ENCODE measurements at regions of chr3 and their contacts with region 1.

Region 1: DNA sequence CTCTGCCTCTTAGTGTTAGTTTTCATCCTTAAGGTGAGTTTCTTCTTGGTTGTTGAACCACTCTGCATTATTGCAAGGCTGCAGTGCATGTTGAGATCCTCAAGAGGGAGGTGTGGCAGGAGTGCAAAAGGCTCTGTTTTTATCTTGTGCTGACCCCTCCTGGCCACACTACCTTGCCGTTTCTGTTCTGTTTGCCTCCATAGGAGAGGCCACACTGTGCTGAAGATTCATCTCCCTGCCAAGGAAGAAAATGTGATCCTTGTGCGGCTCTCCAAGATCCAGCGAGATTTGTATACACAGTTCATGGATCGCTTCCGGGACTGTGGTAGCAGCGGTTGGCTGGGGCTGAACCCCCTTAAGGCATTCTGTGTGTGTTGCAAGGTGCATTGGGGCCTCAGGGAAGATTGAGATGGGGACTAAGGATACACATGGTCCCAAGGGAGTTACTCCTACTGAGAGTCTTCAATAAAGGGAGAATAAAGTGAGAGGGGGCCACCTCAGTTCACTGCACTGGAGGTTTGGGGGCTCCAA is 33.0 kb upstream of the TEX264 start:
- DNase-seq: peak; percentile 76
- ATAC-seq: peak; percentile 91
- H3K4me3 ChIP-seq: peak overlapping the region; percentile 28; the same call in 1 of the 2 replicates
- H3K27ac ChIP-seq: peak overlapping the region; percentile 44
- H3K4me1 ChIP-seq: peaks cover 10% of the 10 kb centered on the region
- H3K27me3 ChIP-seq: no peaks in the 10 kb centered on the region
- CTCF ChIP-seq: peak; percentile 99

Region 2: DNA sequence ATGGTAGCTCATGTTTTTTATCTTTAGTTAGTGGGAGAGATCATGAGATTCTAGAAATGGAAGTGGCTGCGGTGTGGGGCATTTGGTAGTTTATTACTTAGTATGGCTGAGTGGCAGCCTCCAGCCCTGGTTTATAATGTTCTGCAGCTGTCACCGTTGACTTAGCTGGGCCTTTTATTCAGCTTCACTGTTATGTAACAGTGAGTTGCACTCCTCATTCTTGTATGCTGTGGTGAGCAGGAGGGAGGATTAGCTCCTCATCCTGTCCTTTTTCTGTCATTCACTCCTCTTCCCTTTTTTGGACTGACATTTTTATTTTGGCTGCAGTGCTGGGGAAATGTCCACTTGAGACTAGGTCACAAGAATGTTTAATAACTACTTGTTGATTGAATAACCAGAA is 70.0 kb before region 1 on chr3:
- CTCF ChIA-PET with region 1: no interaction called
- POLR2A ChIA-PET with region 1: no interaction called
- intact Hi-C with region 1: no loop called
- DNase-seq: no peak
- ATAC-seq: no peak
- H3K4me3 ChIP-seq: no peak overlapping the region
- H3K27ac ChIP-seq: no peak overlapping the region
- H3K4me1 ChIP-seq: no peaks in the 10 kb centered on the region
- H3K27me3 ChIP-seq: no peaks in the 10 kb centered on the region
- CTCF ChIP-seq: no peak

Region 3: GRCh38 chr3:51670823-51671733 is 33.1 kb after region 1 on chr3 and contains the start of gene TEX264:
- CTCF ChIA-PET with region 1: interaction called, 8 read pairs
- POLR2A ChIA-PET with region 1: no interaction called
- intact Hi-C with region 1: loop called (anchors 2 kb)
- DNase-seq: peak; percentile 95
- ATAC-seq: peak; percentile 67
- H3K4me3 ChIP-seq: peak within 1 kb of the TSS; percentile 91
- H3K27ac ChIP-seq: peak within 1 kb of the TSS; percentile 64
- H3K4me1 ChIP-seq: peaks cover 57% of the 10 kb centered on the region
- H3K27me3 ChIP-seq: no peaks in the 10 kb centered on the region
- CTCF ChIP-seq: no peak
- total RNA-seq, gene TEX264: 85.5 and 88.1 TPM in 2 replicates

Measured in PC-3 (cell line).